Activated CD4-positive, alpha-beta T cell treated with anti-CD3 and anti-CD28 coated beads for 36 hours (primary cell): ENCODE measurements at regions of chr20 and their contacts with region 1.

Region 1: DNA sequence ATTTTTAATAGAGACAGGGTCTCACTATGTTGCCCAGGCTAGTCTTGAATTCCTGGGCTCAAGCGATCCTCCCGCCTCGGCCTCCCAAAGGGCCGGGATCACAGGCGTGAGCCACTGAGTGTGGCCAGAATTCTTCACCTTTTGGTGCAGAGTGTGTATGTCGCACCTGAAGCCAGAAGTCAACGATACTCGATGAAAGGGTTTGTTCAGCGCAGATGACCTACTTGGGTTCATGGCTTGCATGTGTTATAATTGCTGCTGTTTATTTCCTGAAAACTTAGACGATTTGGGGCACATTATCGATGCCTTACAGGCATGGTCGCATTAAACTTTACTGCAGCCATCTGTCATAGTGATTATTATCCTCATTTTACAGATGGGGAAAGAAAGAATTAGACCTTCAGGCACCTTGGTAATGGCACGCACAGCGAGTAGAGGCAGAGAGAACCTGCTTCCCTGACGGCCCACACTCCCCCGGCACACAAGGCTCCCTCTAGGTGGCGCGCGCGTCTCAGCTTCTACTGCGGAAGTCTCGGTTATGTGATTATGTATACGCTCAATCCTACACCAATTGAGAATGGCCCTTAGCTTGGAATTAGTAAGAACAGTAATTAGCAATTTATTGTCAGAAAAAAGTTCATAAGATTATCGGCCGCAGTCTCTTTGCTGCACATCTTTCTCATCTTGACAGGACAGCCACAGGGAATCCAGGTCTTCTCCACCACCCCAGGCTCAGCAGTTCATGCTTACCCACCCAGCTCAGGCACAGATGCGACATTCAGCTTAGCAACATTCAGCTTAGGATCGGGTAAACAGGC is 212.8 kb upstream of the PROKR2 start:
- DNase-seq: peak; percentile 96
- ATAC-seq: peak; percentile 96
- H3K4me3 Mint-ChIP-seq: peak overlapping the region; percentile 36
- H3K27ac Mint-ChIP-seq: peak overlapping the region; percentile 55
- H3K4me1 Mint-ChIP-seq: peaks cover 23% of the 10 kb centered on the region
- H3K27me3 Mint-ChIP-seq: no peaks in the 10 kb centered on the region

Region 2: GRCh38 chr20:5298811-5299210 is 230.7 kb before region 1 on chr20:
- CTCF ChIA-PET with region 1: no interaction called
- POLR2A ChIA-PET with region 1: no interaction called
- intact Hi-C with region 1: no loop called
- DNase-seq: no peak
- ATAC-seq: no peak
- H3K4me3 Mint-ChIP-seq: no peak overlapping the region
- H3K27ac Mint-ChIP-seq: no peak overlapping the region
- H3K4me1 Mint-ChIP-seq: no peaks in the 10 kb centered on the region
- H3K27me3 Mint-ChIP-seq: peaks cover 20% of the 10 kb centered on the region

Region 3: GRCh38 chr20:5550733-5551529 is 21.4 kb after region 1 on chr20:
- CTCF ChIA-PET with region 1: interaction called, 26 read pairs
- POLR2A ChIA-PET with region 1: no interaction called
- intact Hi-C with region 1: no loop called
- DNase-seq: no peak
- ATAC-seq: peak; percentile 33
- H3K4me3 Mint-ChIP-seq: no peak overlapping the region
- H3K27ac Mint-ChIP-seq: no peak overlapping the region
- H3K4me1 Mint-ChIP-seq: peaks cover 33% of the 10 kb centered on the region
- H3K27me3 Mint-ChIP-seq: no peaks in the 10 kb centered on the region

Region 4: DNA sequence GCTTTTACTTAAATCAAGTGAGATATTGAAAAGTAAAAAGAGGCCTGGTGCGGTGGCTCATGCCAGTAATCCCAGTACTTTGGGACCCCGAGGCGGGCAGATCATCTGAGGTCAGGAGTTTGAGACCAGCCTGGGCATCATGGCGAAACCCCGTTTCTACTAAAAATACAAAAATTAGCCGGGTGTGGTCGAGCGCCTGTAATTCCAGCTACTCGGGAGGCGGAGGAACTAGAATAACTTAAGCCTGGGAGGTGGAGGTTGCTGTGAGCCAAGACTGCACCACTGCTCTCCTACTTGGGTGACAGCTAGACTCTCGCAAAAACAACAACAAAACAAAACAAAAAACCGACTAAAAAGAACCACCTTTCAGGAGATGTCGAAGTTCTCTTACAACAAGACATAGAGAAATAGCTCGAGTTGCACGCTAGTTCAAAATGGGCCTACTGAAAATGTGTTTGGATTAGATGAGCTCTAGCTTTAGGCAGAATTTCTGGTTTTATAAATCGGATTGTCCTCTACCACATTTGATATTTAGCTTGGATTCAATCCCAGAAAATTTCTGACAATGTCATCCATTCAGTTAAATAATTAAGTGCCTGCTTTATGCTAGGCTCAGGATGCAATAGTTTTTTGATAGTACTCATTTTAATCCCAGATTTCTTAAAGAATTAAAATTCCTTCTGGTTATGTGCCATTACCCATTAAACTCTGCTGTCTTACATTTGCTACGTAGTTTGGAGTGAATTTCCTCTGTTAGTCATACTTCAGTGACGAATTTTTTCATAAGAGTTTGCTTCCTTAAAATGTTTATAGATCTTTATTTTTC is 83.1 kb after region 1 on chr20:
- CTCF ChIA-PET with region 1: no interaction called
- POLR2A ChIA-PET with region 1: no interaction called
- intact Hi-C with region 1: no loop called
- DNase-seq: no peak
- ATAC-seq: no peak
- H3K4me3 Mint-ChIP-seq: no peak overlapping the region
- H3K27ac Mint-ChIP-seq: no peak overlapping the region
- H3K4me1 Mint-ChIP-seq: peaks cover 24% of the 10 kb centered on the region
- H3K27me3 Mint-ChIP-seq: no peaks in the 10 kb centered on the region

Region 5: GRCh38 chr20:5779071-5779900 is 249.7 kb after region 1 on chr20:
- CTCF ChIA-PET with region 1: interaction called, 14 read pairs
- POLR2A ChIA-PET with region 1: no interaction called
- intact Hi-C with region 1: no loop called
- DNase-seq: no peak
- ATAC-seq: no peak
- H3K4me3 Mint-ChIP-seq: no peak overlapping the region
- H3K27ac Mint-ChIP-seq: no peak overlapping the region
- H3K4me1 Mint-ChIP-seq: peaks cover 7% of the 10 kb centered on the region
- H3K27me3 Mint-ChIP-seq: no peaks in the 10 kb centered on the region

Region 6: DNA sequence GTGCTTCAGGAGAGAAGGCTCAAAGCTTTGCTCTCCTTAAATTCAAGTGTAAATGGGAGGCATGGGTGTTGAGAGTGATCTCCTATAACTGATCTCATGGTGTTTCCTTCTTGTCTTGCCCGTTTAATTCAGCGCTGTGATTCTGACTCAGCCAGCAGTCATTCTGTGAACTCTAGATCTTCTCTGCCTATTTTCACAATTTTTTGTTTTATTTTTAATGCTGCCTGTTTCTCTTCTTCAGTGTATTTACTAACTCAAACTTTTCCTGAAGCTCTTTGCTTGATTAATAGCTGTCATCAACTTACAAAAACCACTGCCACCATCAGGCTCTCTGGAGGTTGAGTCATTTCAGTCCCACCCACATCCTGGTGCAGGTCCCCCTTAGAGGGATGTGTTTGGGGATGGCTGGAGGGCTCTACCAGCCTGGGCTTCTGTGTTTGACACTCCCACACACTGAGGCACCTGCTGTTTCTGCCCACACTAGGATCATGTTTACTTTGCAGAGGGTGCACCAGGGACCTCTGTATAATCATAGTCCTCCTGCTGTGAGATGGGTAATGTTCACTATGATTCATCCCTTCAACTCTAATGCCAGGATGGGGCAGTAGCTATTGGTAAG is 314.6 kb after region 1 on chr20:
- CTCF ChIA-PET with region 1: interaction called, 9 read pairs
- POLR2A ChIA-PET with region 1: no interaction called
- intact Hi-C with region 1: loop called in 1 of 2 experiments (anchors 5 kb)
- DNase-seq: peak; percentile 83
- ATAC-seq: peak; percentile 92
- H3K4me3 Mint-ChIP-seq: peak overlapping the region; percentile 30
- H3K27ac Mint-ChIP-seq: peak overlapping the region; percentile 85
- H3K4me1 Mint-ChIP-seq: peaks cover 62% of the 10 kb centered on the region
- H3K27me3 Mint-ChIP-seq: no peaks in the 10 kb centered on the region

Region 7: DNA sequence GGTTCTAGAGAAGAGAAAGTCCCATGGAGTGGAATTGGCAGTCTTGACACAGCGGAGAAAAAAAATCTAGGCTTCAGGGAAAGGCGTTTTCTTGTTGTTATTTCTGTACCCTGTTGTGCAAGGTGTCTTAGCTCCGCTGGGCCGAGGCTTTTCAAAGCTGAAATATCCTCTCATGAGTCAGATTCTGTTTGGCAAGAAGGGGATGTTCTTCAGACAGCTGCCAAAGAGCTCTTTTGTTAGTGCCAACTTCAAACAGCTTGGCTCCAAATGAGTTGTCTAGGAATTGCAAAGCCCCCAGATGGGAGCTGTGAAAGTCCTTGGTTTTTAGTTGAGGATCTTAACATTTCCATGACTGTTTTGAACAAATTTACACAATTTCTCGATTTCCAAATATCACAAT is 478.7 kb after region 1 on chr20:
- CTCF ChIA-PET with region 1: interaction called, 5 read pairs
- POLR2A ChIA-PET with region 1: no interaction called
- intact Hi-C with region 1: loop called (anchors 1 kb)
- DNase-seq: peak; percentile 27
- ATAC-seq: no peak
- H3K4me3 Mint-ChIP-seq: peak overlapping the region; percentile 96
- H3K27ac Mint-ChIP-seq: no peak overlapping the region
- H3K4me1 Mint-ChIP-seq: peaks cover 34% of the 10 kb centered on the region
- H3K27me3 Mint-ChIP-seq: no peaks in the 10 kb centered on the region